HEK293T (cell line): ENCODE measurements at regions of chr17 and their contacts with region 1.

Region 1: DNA sequence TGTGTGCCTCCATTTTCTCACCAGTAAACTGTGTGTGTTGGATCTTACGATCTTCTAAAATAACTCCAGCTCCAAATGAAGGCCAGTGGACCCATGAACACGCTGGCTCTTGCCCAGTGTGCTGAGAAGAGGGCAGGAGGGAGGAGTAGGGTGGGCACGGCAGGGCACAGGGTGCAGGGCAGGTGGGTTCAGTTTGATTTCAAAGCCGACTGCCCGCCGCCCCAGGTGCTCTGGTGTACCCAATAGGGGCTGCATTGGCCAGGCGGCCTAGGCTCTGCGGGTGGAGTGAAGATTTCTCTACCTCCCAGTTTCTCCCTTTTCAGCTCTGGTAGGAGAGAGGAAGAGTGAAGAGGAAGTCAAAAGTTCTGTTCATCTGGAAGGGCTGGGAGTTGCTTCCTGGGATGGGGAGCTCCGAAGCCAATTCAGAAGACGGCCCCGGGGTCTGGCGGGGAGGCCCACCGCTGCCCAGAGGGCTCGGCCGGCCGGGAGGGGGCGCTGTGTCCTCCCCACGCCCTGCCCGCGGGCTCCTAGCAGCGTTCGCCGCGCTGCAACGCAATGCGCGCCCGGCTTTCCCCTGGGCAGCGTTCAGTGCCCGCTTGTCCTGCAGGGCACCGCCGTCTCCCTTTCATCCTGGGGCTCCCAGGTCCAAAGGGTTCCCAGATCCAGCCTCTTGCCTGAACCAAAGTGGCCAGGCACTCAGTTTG is 1.1 kb upstream of the CRHR1 start:
- DNase-seq: peak; percentile 91

Region 2: DNA sequence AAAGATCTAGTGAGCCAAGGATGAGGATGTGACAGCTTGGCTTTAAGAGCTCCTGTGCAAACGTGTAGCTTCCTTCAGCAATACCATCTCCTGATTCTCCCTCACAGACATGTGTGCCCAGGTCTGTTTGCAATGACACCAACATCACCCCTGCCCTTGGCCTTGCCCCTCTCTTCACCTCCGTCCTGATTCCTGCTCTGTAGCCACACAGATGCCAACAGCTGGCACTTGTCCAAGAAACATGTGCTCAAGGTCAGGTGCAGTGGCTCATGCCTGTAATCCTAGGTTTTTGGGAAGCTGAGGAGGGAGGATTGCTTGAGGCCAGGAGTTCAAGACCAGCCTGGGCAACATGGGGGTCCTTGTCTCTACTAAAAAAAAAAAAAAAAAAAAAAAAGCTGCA is 102.7 kb before region 1 on chr17:
- CTCF ChIA-PET with region 1: no interaction called
- POLR2A ChIA-PET with region 1: no interaction called
- DNase-seq: no peak

Region 3: GRCh38 chr17:45770632-45771270 is 12.3 kb before region 1 on chr17:
- CTCF ChIA-PET with region 1: interaction called, 38 read pairs
- POLR2A ChIA-PET with region 1: interaction called, 5 read pairs
- DNase-seq: no peak

Region 4: GRCh38 chr17:45794840-45795239 is 11.8 kb after region 1 on chr17:
- CTCF ChIA-PET with region 1: interaction called, 15 read pairs
- POLR2A ChIA-PET with region 1: interaction called, 4 read pairs
- DNase-seq: peak; percentile 38